SK-N-SH (cell line): ENCODE measurements at regions of chr1 and their contacts with region 1.

Region 1: GRCh38 chr1:21255278-21255942 is 34.9 kb downstream of the ECE1 start:
- DNase-seq: peak; percentile 83
- H3K4me3 ChIP-seq: no peak overlapping the region; a peak in 1 of 4 replicates
- H3K27ac ChIP-seq: peak overlapping the region; percentile 56 to 98; a peak in 3 of 4 replicates
- H3K4me1 ChIP-seq: peaks cover 8 to 37% of the 10 kb centered on the region in 2 experiments; a peak in 2 of 4 replicates
- H3K27me3 ChIP-seq: no peaks in the 10 kb centered on the region
- CTCF ChIP-seq: peak; percentile 86
- EP300 ChIP-seq: peak in 1 of 2 experiments; percentile 26; a peak in 1 of 4 replicates
- RAD21 ChIP-seq: peak; percentile 99

Region 2: GRCh38 chr1:20696397-20697329 is 558.7 kb before region 1 on chr1:
- CTCF ChIA-PET with region 1: no interaction called
- POLR2A ChIA-PET with region 1: no interaction called
- DNase-seq: peak; percentile 96
- H3K4me3 ChIP-seq: peak overlapping the region; percentile 49 to 70
- H3K27ac ChIP-seq: peak overlapping the region; percentile 56 to 95
- H3K4me1 ChIP-seq: peaks cover 3 to 21% of the 10 kb centered on the region in 2 experiments; a peak in 3 of 4 replicates
- H3K27me3 ChIP-seq: no peaks in the 10 kb centered on the region
- CTCF ChIP-seq: peak; percentile 86
- EP300 ChIP-seq: no peak
- RAD21 ChIP-seq: peak; percentile 89

Region 3: GRCh38 chr1:20974069-20974468 is 281.3 kb before region 1 on chr1:
- CTCF ChIA-PET with region 1: no interaction called
- POLR2A ChIA-PET with region 1: no interaction called
- DNase-seq: no peak
- H3K4me3 ChIP-seq: no peak overlapping the region
- H3K27ac ChIP-seq: peak overlapping the region in 1 of 2 experiments; percentile 69; a peak in 3 of 4 replicates
- H3K4me1 ChIP-seq: peaks cover 10 to 11% of the 10 kb centered on the region in 2 experiments; a peak in 3 of 4 replicates
- H3K27me3 ChIP-seq: no peaks in the 10 kb centered on the region
- CTCF ChIP-seq: no peak
- EP300 ChIP-seq: 0 out of 4 replicates have a peak, but pooled peaks of 1 of the 2 experiments have one; percentile 53
- RAD21 ChIP-seq: no peak

Region 4: GRCh38 chr1:21154717-21155116 is 100.7 kb before region 1 on chr1:
- CTCF ChIA-PET with region 1: no interaction called
- POLR2A ChIA-PET with region 1: no interaction called
- DNase-seq: no peak
- H3K4me3 ChIP-seq: no peak overlapping the region
- H3K27ac ChIP-seq: peak overlapping the region in 1 of 2 experiments; percentile 93; a peak in 1 of 4 replicates
- H3K4me1 ChIP-seq: peaks cover 4 to 6% of the 10 kb centered on the region in 2 experiments
- H3K27me3 ChIP-seq: no peaks in the 10 kb centered on the region
- CTCF ChIP-seq: no peak
- EP300 ChIP-seq: no peak
- RAD21 ChIP-seq: no peak

Region 5: GRCh38 chr1:21232044-21232443 is 23.4 kb before region 1 on chr1:
- CTCF ChIA-PET with region 1: interaction called, 73 read pairs
- POLR2A ChIA-PET with region 1: no interaction called
- DNase-seq: peak; percentile 81
- H3K4me3 ChIP-seq: no peak overlapping the region
- H3K27ac ChIP-seq: no peak overlapping the region
- H3K4me1 ChIP-seq: no peaks in the 10 kb centered on the region
- H3K27me3 ChIP-seq: no peaks in the 10 kb centered on the region
- CTCF ChIP-seq: peak; percentile 84
- EP300 ChIP-seq: no peak
- RAD21 ChIP-seq: peak; percentile 93

Region 6: GRCh38 chr1:21244986-21245687 is 10.3 kb before region 1 on chr1:
- CTCF ChIA-PET with region 1: interaction called, 13 read pairs
- POLR2A ChIA-PET with region 1: no interaction called
- DNase-seq: peak; percentile 43
- H3K4me3 ChIP-seq: no peak overlapping the region
- H3K27ac ChIP-seq: no peak overlapping the region
- H3K4me1 ChIP-seq: no peaks in the 10 kb centered on the region
- H3K27me3 ChIP-seq: no peaks in the 10 kb centered on the region
- CTCF ChIP-seq: peak; percentile 57
- EP300 ChIP-seq: no peak
- RAD21 ChIP-seq: no peak

Region 7: GRCh38 chr1:21280011-21280471 is 24.6 kb after region 1 on chr1:
- CTCF ChIA-PET with region 1: interaction called, 12 read pairs
- POLR2A ChIA-PET with region 1: no interaction called
- DNase-seq: no peak
- H3K4me3 ChIP-seq: no peak overlapping the region
- H3K27ac ChIP-seq: peak overlapping the region in 1 of 2 experiments; percentile 72; a peak in 2 of 4 replicates
- H3K4me1 ChIP-seq: peaks cover 9 to 71% of the 10 kb centered on the region in 2 experiments; a peak in 2 of 4 replicates
- H3K27me3 ChIP-seq: no peaks in the 10 kb centered on the region
- CTCF ChIP-seq: no peak
- EP300 ChIP-seq: no peak
- RAD21 ChIP-seq: no peak

Region 8: GRCh38 chr1:21302747-21303715 is 47.6 kb after region 1 on chr1:
- CTCF ChIA-PET with region 1: interaction called, 31 read pairs
- POLR2A ChIA-PET with region 1: interaction called, 4 read pairs
- DNase-seq: peak; percentile 69
- H3K4me3 ChIP-seq: no peak overlapping the region
- H3K27ac ChIP-seq: peak overlapping the region; percentile 64 to 87
- H3K4me1 ChIP-seq: peaks cover 37 to 61% of the 10 kb centered on the region in 2 experiments
- H3K27me3 ChIP-seq: no peaks in the 10 kb centered on the region
- CTCF ChIP-seq: 0 out of 2 replicates have a peak, but pooled peaks have one; percentile 8
- EP300 ChIP-seq: peak in 1 of 2 experiments; percentile 72; a peak in 1 of 4 replicates
- RAD21 ChIP-seq: peak; percentile 55

Region 9: DNA sequence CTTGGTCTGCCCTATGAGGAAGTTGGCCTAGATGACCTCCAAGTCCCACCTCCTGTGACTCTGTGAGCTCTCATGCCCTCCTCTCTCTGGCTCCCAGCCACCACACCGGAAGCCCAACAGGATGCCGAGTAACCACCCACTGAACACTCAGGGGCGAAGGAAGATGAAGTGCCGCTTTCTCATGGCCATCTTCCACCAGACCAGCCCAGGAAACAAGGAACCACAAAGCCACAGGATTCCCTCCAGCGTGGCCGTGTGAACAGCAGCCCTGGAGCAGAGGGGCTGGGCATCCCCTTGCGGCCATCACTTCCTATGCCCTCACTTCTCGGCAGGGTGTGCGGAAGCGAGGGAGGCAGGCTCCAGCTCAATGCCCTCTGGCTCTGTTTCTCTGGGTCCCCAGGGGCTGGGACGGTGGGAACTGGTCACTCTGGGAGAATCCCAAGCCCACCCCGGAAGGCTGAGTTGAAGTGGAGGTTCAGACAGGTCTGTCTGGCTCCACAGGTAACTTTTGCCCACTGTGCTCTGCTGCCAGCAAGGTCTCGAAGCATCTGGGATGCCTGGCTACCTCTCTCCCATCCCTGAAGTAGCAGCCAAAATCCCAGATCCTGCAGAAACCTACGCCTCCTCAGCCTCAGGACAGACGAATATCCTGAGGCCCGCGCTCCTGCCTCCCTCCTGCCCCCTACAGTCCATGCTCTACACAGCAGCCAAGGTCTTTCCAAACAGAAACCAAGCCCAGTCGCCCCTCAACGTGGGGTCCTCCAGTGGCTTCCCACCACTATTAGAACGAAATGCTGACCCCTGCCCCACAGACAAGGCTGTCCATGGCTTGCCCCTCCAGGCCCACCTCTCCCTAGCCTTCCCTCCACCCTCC is 79.0 kb after region 1 on chr1:
- CTCF ChIA-PET with region 1: interaction called, 65 read pairs
- POLR2A ChIA-PET with region 1: interaction called, 12 read pairs
- DNase-seq: peak; percentile 59
- H3K4me3 ChIP-seq: peak overlapping the region in 1 of 2 experiments; percentile 23; a peak in 1 of 4 replicates
- H3K27ac ChIP-seq: peak overlapping the region; percentile 56 to 91; a peak in 3 of 4 replicates
- H3K4me1 ChIP-seq: peaks cover 26 to 64% of the 10 kb centered on the region in 2 experiments
- H3K27me3 ChIP-seq: no peaks in the 10 kb centered on the region
- CTCF ChIP-seq: peak; percentile 80
- EP300 ChIP-seq: no peak
- RAD21 ChIP-seq: peak; percentile 66

Region 10: DNA sequence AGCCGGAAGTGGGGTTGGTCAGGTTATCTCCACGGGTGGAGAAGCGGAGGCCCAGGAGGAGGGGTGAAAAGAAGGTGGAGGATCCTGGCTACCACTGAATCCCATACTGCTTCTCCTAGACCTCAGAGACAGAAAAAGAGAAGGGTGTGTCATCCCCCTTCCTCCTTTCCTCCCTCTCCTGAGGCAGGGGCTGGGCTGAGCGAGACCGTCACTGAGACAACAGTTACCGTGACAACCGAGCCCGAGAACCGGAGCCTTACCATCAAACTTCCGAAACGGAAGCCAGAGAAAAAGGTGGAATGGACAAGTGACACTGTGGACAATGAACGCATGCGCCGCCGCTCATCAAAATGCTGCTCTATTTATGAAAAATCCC is 142.4 kb after region 1 on chr1:
- CTCF ChIA-PET with region 1: no interaction called
- POLR2A ChIA-PET with region 1: no interaction called
- DNase-seq: no peak
- H3K4me3 ChIP-seq: no peak overlapping the region
- H3K27ac ChIP-seq: no peak overlapping the region
- H3K4me1 ChIP-seq: no peaks in the 10 kb centered on the region
- H3K27me3 ChIP-seq: no peaks in the 10 kb centered on the region
- CTCF ChIP-seq: no peak
- EP300 ChIP-seq: no peak
- RAD21 ChIP-seq: no peak